Heart left ventricle (tissue), 16 donors: ENCODE measurements at regions of chr7 and their contacts with region 1.

Region 1: GRCh38 chr7:100177045-100178001 is at the starts of genes GPC2 and STAG3:
- DNase-seq: peak; percentile 95 to 98 (median 96)
- ATAC-seq: peak; percentile 94 to 97 (median 96)
- H3K4me3 ChIP-seq: peak within 1 kb of the TSS; percentile 28 to 69 (median 51)
- H3K27ac ChIP-seq: peak within 1 kb of the TSS in 4 of 12 donors; percentile 27 to 60 (median 46)
- H3K4me1 ChIP-seq: peaks cover 0 to 16% (median 8%) of the 10 kb centered on the region in 12 donors
- H3K27me3 ChIP-seq: peaks cover 0 to 9% (median under 1%) of the 10 kb centered on the region in 9 donors
- CTCF ChIP-seq: no peak
- POLR2A ChIP-seq: peak in 1 of 2 donors; percentile 42
- total RNA-seq, gene GPC2: 0.27 to 1.1 (median 0.50) TPM in 7 of 9 donors, not detected in the others
- total RNA-seq, gene STAG3: 0.09 to 1.3 (median 0.58) TPM in 8 of 9 donors, not detected in the other

Region 2: GRCh38 chr7:100022665-100023064 is 154.7 kb before region 1 on chr7:
- intact Hi-C with region 1: no loop called
- DNase-seq: no peak
- ATAC-seq: no peak
- H3K4me3 ChIP-seq: no peak overlapping the region
- H3K27ac ChIP-seq: no peak overlapping the region
- H3K4me1 ChIP-seq: peaks cover 0 to 25% (median 8%) of the 10 kb centered on the region in 12 donors
- H3K27me3 ChIP-seq: no peaks in the 10 kb centered on the region
- CTCF ChIP-seq: no peak
- POLR2A ChIP-seq: no peak

Region 3: GRCh38 chr7:100158229-100159098 is 18.9 kb before region 1 on chr7 and contains the start of gene TRAPPC14:
- intact Hi-C with region 1: loop called in 1 of 10 experiments (anchors 1 kb)
- DNase-seq: peak; percentile 92 to 97 (median 96)
- ATAC-seq: peak; percentile 86 to 94 (median 91)
- H3K4me3 ChIP-seq: peak within 1 kb of the TSS; percentile 70 to 99 (median 91)
- H3K27ac ChIP-seq: peak within 1 kb of the TSS; percentile 56 to 94 (median 82)
- H3K4me1 ChIP-seq: peaks cover 0 to 38% (median 15%) of the 10 kb centered on the region in 12 donors
- H3K27me3 ChIP-seq: no peaks in the 10 kb centered on the region
- CTCF ChIP-seq: peak in 1 of 12 donors; percentile 14
- POLR2A ChIP-seq: peak in 1 of 2 donors; percentile 59
- total RNA-seq, gene TRAPPC14: 4.0 to 14.9 (median 7.4) TPM

Region 4: GRCh38 chr7:100200693-100201092 is 23.4 kb after region 1 on chr7:
- intact Hi-C with region 1: no loop called
- DNase-seq: no peak
- ATAC-seq: no peak
- H3K4me3 ChIP-seq: no peak overlapping the region
- H3K27ac ChIP-seq: no peak overlapping the region
- H3K4me1 ChIP-seq: no peaks in the 10 kb centered on the region
- H3K27me3 ChIP-seq: no peaks in the 10 kb centered on the region
- CTCF ChIP-seq: no peak
- POLR2A ChIP-seq: no peak